Mammary epithelial cell (primary cell): ENCODE measurements at regions of chr15 and their contacts with region 1.

Region 1: DNA sequence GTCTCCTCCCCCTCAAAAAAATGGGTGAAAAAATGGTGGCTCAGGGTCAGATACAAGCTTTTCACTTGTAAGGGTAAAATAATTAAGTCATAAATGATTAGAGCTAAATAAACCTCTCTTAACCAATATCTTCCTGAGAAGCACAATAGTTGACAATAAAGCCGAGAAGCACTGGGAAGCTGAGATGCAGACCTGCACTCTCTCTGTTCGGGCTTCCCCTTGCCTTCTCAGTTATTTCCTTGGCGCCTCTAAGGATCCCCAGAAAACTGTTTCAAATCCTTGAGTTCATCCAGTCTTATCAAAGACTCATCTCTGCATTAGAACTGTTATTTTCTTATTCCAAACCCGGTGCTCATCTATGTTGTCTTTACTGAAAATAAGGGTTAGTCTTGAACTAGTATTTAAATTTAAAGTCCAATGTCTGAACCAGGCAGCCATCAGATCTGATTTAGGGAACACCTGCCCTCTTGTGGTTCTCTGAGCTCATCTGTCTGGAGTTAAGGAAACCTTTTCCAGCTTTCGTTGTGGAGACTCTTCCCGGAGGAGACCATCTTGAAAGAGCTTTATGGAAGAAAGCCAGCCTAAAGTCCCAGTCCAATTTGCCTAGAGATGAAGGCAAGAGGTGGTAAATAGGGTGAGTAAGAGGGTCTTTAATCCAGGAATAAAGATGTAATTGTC is 256.4 kb upstream of the MCTP2 start:
- DNase-seq: peak; percentile 33
- H3K4me3 ChIP-seq: no peak overlapping the region
- H3K27ac ChIP-seq: no peak overlapping the region
- H3K4me1 ChIP-seq: no peaks in the 10 kb centered on the region
- H3K27me3 ChIP-seq: no peaks in the 10 kb centered on the region
- CTCF ChIP-seq: peak; percentile 48 to 77

Region 2: GRCh38 chr15:93399121-93399520 is 575.8 kb before region 1 on chr15:
- CTCF ChIA-PET with region 1: interaction called, 4 read pairs
- dilution Hi-C with region 1: no loop called
- in situ Hi-C with region 1: no loop called
- intact Hi-C with region 1: loop called (anchors 1 kb)
- DNase-seq: no peak
- H3K4me3 ChIP-seq: no peak overlapping the region
- H3K27ac ChIP-seq: no peak overlapping the region
- H3K4me1 ChIP-seq: no peaks in the 10 kb centered on the region
- H3K27me3 ChIP-seq: no peaks in the 10 kb centered on the region
- CTCF ChIP-seq: peak in 1 of 2 donors; percentile 9

Region 3: GRCh38 chr15:93649691-93650235 is 325.2 kb before region 1 on chr15:
- CTCF ChIA-PET with region 1: no interaction called
- dilution Hi-C with region 1: no loop called
- in situ Hi-C with region 1: no loop called
- intact Hi-C with region 1: loop called (anchors 10 kb)
- DNase-seq: no peak
- H3K4me3 ChIP-seq: no peak overlapping the region
- H3K27ac ChIP-seq: no peak overlapping the region
- H3K4me1 ChIP-seq: no peaks in the 10 kb centered on the region
- H3K27me3 ChIP-seq: no peaks in the 10 kb centered on the region
- CTCF ChIP-seq: no peak

Region 4: DNA sequence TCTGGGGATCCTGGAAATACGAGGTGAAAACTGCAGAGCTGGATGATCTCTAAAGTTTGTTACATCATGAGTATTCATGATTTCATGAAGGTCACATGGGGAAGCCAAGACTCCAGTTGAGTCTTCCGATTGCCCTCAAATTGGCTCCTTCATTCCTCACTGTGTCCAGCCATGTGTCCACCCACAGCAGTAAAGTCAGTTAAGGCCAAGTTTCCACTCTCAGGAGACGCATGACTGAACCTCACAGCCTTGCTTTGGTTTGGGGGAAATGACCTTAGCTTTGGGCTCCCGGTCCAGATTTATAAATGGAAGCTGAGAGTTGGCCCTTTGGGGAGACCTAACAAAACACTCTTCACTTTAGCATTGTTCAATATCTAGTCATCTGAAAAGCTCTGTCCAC is 33.2 kb before region 1 on chr15:
- CTCF ChIA-PET with region 1: interaction called, 10 read pairs
- dilution Hi-C with region 1: no loop called
- in situ Hi-C with region 1: no loop called
- intact Hi-C with region 1: no loop called
- DNase-seq: no peak
- H3K4me3 ChIP-seq: no peak overlapping the region
- H3K27ac ChIP-seq: no peak overlapping the region
- H3K4me1 ChIP-seq: no peaks in the 10 kb centered on the region
- H3K27me3 ChIP-seq: no peaks in the 10 kb centered on the region
- CTCF ChIP-seq: no peak